ENCODE measurements at regions of chr9 and their contacts with region 1.

Region 1: GRCh38 chr9:124257844-124258606 is at the start of gene NEK6:
- DNase-seq: peak; percentile 31
- ATAC-seq: peak; percentile 8; the same call in 1 of the 2 replicates
- H3K4me3 ChIP-seq: peak within 1 kb of the TSS; percentile 92
- H3K27ac ChIP-seq: peak within 1 kb of the TSS; percentile 73
- H3K4me1 ChIP-seq: peaks cover 37% of the 10 kb centered on the region
- H3K27me3 ChIP-seq: no peaks in the 10 kb centered on the region
- CTCF ChIP-seq: no peak
- total RNA-seq, gene NEK6: 21.1 and 22.1 TPM in 2 replicates

Region 2: GRCh38 chr9:124126571-124127289 is 131.3 kb before region 1 on chr9:
- CTCF ChIA-PET with region 1: no interaction called
- POLR2A ChIA-PET with region 1: no interaction called
- intact Hi-C with region 1: loop called (anchors 5 kb)
- DNase-seq: peak; percentile 77
- ATAC-seq: 0 out of 2 replicates have a peak, but pooled peaks have one; percentile 37
- H3K4me3 ChIP-seq: no peak overlapping the region
- H3K27ac ChIP-seq: no peak overlapping the region
- H3K4me1 ChIP-seq: peaks cover 4% of the 10 kb centered on the region; the same call in 1 of the 2 replicates
- H3K27me3 ChIP-seq: no peaks in the 10 kb centered on the region
- CTCF ChIP-seq: peak; percentile 89

Region 3: DNA sequence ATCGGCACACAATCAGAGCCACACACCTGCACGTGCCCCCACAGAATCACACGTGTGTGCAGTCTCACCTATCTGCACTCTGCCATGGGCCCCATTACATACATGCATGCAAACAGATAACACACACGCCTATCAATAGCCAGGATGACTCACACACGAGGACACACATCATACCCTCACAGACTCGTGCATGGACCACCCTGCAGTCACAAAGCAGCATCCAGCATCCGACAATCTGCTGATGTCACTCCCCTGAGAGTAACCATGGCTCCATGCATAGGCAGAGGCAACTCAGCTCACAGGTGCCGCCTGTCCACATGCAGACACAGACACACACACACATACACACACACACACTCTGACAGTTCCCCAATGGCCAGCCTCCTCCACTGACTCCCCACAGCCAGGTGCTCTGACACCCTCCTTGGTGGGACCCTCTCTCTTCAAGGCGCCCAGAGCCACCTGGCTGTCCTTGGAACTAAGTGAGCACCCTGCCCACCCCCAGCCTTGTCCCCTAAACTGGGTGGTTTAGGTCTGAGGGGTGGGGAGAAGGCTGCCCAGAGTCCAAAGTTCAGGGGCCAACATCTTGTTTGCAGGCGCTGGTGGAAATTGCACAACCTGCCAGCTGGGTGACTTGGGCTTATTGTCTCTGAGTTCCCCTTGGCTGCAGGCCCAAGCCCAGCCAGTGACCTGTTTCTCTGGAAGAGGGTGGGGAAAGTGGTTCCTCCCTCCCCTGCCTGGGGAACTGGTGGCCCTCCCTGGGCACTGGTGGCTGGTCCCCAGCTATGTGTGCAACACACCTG is 34.9 kb before region 1 on chr9:
- CTCF ChIA-PET with region 1: no interaction called
- POLR2A ChIA-PET with region 1: no interaction called
- intact Hi-C with region 1: loop called (anchors 5 kb)
- DNase-seq: peak; percentile 82
- ATAC-seq: peak; percentile 33
- H3K4me3 ChIP-seq: no peak overlapping the region
- H3K27ac ChIP-seq: peak overlapping the region; percentile 24; the same call in 1 of the 2 replicates
- H3K4me1 ChIP-seq: peaks cover 53% of the 10 kb centered on the region
- H3K27me3 ChIP-seq: no peaks in the 10 kb centered on the region
- CTCF ChIP-seq: no peak

Region 4: DNA sequence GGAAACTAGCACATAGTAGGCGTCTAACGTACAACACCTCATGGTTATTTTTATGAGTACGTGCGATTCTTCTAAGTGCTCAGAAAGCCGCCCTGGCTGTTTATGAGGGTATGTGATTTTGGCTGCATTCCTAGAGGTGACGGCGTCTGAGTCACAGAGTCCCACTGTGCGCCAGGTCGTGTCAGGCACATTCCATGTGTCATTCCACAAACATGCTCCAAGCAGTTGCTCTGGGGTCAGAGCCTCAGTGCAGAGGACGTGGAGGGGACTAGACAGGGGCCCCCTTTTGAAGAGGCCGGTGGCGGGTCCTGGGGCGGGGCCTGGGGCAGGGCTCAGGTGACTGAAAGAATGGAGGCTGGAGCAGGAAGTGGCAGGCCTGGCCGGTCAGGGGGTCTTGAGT is 51.6 kb after region 1 on chr9:
- CTCF ChIA-PET with region 1: no interaction called
- POLR2A ChIA-PET with region 1: no interaction called
- intact Hi-C with region 1: loop called (anchors 5 kb)
- DNase-seq: peak; percentile 97
- ATAC-seq: peak; percentile 95
- H3K4me3 ChIP-seq: no peak overlapping the region
- H3K27ac ChIP-seq: peak overlapping the region; percentile 26; the same call in 1 of the 2 replicates
- H3K4me1 ChIP-seq: peaks cover 22% of the 10 kb centered on the region
- H3K27me3 ChIP-seq: no peaks in the 10 kb centered on the region
- CTCF ChIP-seq: no peak